Naive thymus-derived CD4-positive, alpha-beta T cell (primary cell): ENCODE measurements at regions of chr11 and their contacts with region 1.

Region 1: GRCh38 chr11:116927163-116927974 is 89.9 kb upstream of the APOA1 start:
- DNase-seq: peak in 7 of 9 donors; percentile 49 to 75 (median 65)
- ATAC-seq: peak; percentile 52
- H3K4me3 ChIP-seq: peak overlapping the region; percentile 18
- H3K4me3 Mint-ChIP-seq: peak overlapping the region; percentile 56 to 85 (median 72)
- H3K27ac ChIP-seq: peak overlapping the region; percentile 81
- H3K27ac Mint-ChIP-seq: peak overlapping the region; percentile 64 to 98 (median 94)
- H3K4me1 ChIP-seq: peaks cover 76 to 80% of the 10 kb centered on the region in 2 donors
- H3K4me1 Mint-ChIP-seq: peaks cover 53 to 90% (median 83%) of the 10 kb centered on the region in 7 donors
- H3K27me3 ChIP-seq: no peaks in the 10 kb centered on the region
- H3K27me3 Mint-ChIP-seq: no peaks in the 10 kb centered on the region

Region 2: DNA sequence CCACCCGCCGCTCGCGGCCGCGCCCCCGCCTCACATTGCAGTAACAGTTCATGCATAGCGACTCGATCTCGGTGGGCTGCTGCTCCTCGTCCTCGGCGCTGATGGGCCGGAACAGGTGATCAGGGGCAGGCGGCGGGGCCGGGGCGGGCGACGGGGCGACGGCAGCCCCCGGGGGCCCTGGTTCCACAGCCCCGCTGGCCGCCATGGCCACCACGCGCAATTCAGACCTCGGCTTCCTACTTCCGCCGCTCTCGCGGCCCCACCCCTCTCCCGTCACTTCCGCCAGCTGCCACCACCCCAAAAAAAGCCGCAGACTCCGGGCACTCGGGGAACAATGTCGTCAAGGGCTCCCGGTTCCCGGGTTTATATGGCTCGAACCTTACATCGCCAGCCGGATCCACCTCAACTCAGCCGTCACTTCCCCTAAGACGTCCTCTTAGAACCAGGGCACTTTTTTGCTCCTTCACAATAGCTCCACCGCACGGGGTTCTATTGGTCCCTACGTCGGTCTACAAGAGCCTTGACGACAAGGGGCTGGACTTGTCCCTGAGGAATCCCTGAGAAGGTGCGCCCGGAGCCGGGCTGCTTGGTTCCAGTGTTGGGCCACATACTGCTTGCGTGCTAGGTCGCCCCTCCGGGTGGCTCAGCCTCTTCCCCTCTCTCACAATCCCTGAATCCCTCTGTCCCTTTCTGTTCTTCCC is 139.4 kb before region 1 on chr11 and contains the start of gene ZPR1:
- CTCF ChIA-PET with region 1: no interaction called
- POLR2A ChIA-PET with region 1: interaction called, 3 read pairs
- intact Hi-C with region 1: loop called in 1 of 2 experiments (anchors 2 kb)
- DNase-seq: peak; percentile 75 to 88 (median 87)
- ATAC-seq: peak; percentile 92
- H3K4me3 ChIP-seq: peak within 1 kb of the TSS; percentile 79
- H3K4me3 Mint-ChIP-seq: peak within 1 kb of the TSS; percentile 85 to 98 (median 92)
- H3K27ac ChIP-seq: peak within 1 kb of the TSS; percentile 95
- H3K27ac Mint-ChIP-seq: peak within 1 kb of the TSS; percentile 80 to 98 (median 96)
- H3K4me1 ChIP-seq: peaks cover 17 to 24% of the 10 kb centered on the region in 2 donors
- H3K4me1 Mint-ChIP-seq: peaks cover 32 to 57% (median 44%) of the 10 kb centered on the region in 7 donors
- H3K27me3 ChIP-seq: no peaks in the 10 kb centered on the region
- H3K27me3 Mint-ChIP-seq: no peaks in the 10 kb centered on the region
- total RNA-seq, gene ZPR1: 65.8 to 117 (median 68.8) TPM

Region 3: GRCh38 chr11:116890193-116890592 is 37.2 kb before region 1 on chr11:
- CTCF ChIA-PET with region 1: interaction called, 3 read pairs
- POLR2A ChIA-PET with region 1: no interaction called
- intact Hi-C with region 1: loop called (anchors 5 to 10 kb)
- DNase-seq: peak in 4 of 9 donors; percentile 3 to 19 (median 10)
- ATAC-seq: peak; percentile 58
- H3K4me3 ChIP-seq: no peak overlapping the region
- H3K4me3 Mint-ChIP-seq: peak overlapping the region in 4 of 10 donors; percentile 2 to 11 (median 8)
- H3K27ac ChIP-seq: no peak overlapping the region
- H3K27ac Mint-ChIP-seq: peak overlapping the region; percentile 0 to 83 (median 64)
- H3K4me1 ChIP-seq: peaks cover 7 to 12% of the 10 kb centered on the region in 2 donors
- H3K4me1 Mint-ChIP-seq: peaks cover 13 to 29% (median 19%) of the 10 kb centered on the region in 7 donors
- H3K27me3 ChIP-seq: no peaks in the 10 kb centered on the region
- H3K27me3 Mint-ChIP-seq: no peaks in the 10 kb centered on the region

Region 4: GRCh38 chr11:116986521-116987105 is 59.2 kb after region 1 on chr11:
- CTCF ChIA-PET with region 1: no interaction called
- POLR2A ChIA-PET with region 1: no interaction called
- intact Hi-C with region 1: loop called (anchors 5 kb)
- DNase-seq: no peak
- ATAC-seq: peak; percentile 71
- H3K4me3 ChIP-seq: no peak overlapping the region
- H3K4me3 Mint-ChIP-seq: peak overlapping the region in 8 of 10 donors; percentile 0 to 67 (median 20)
- H3K27ac ChIP-seq: no peak overlapping the region
- H3K27ac Mint-ChIP-seq: peak overlapping the region in 5 of 9 donors; percentile 0 to 80 (median 10)
- H3K4me1 ChIP-seq: peaks cover 0 to 10% of the 10 kb centered on the region in 2 donors
- H3K4me1 Mint-ChIP-seq: peaks cover 45 to 75% (median 69%) of the 10 kb centered on the region in 7 donors
- H3K27me3 ChIP-seq: no peaks in the 10 kb centered on the region
- H3K27me3 Mint-ChIP-seq: no peaks in the 10 kb centered on the region

Region 5: GRCh38 chr11:117037279-117037974 is 110.1 kb after region 1 on chr11:
- CTCF ChIA-PET with region 1: interaction called, 4 read pairs
- POLR2A ChIA-PET with region 1: no interaction called
- intact Hi-C with region 1: loop called in 1 of 2 experiments (anchors 5 kb)
- DNase-seq: peak in 6 of 9 donors; percentile 21 to 51 (median 38)
- ATAC-seq: peak; percentile 48
- H3K4me3 ChIP-seq: no peak overlapping the region
- H3K4me3 Mint-ChIP-seq: peak overlapping the region; percentile 4 to 68 (median 50)
- H3K27ac ChIP-seq: peak overlapping the region; percentile 58
- H3K27ac Mint-ChIP-seq: peak overlapping the region; percentile 34 to 93 (median 85)
- H3K4me1 ChIP-seq: peaks cover 17 to 24% of the 10 kb centered on the region in 2 donors
- H3K4me1 Mint-ChIP-seq: peaks cover 25 to 79% (median 64%) of the 10 kb centered on the region in 7 donors
- H3K27me3 ChIP-seq: no peaks in the 10 kb centered on the region
- H3K27me3 Mint-ChIP-seq: no peaks in the 10 kb centered on the region

Region 6: GRCh38 chr11:117178210-117179034 is 251.1 kb after region 1 on chr11 and contains the start of gene SIDT2:
- CTCF ChIA-PET with region 1: no interaction called
- POLR2A ChIA-PET with region 1: interaction called, 5 read pairs
- intact Hi-C with region 1: loop called in 1 of 2 experiments (anchors 2 kb)
- DNase-seq: peak; percentile 75 to 89 (median 87)
- ATAC-seq: peak; percentile 94
- H3K4me3 ChIP-seq: peak within 1 kb of the TSS; percentile 87
- H3K4me3 Mint-ChIP-seq: peak within 1 kb of the TSS; percentile 92 to 98 (median 94)
- H3K27ac ChIP-seq: peak within 1 kb of the TSS; percentile 85
- H3K27ac Mint-ChIP-seq: peak within 1 kb of the TSS; percentile 88 to 98 (median 96)
- H3K4me1 ChIP-seq: peaks cover 12 to 26% of the 10 kb centered on the region in 2 donors
- H3K4me1 Mint-ChIP-seq: peaks cover 26 to 42% (median 32%) of the 10 kb centered on the region in 7 donors
- H3K27me3 ChIP-seq: no peaks in the 10 kb centered on the region
- H3K27me3 Mint-ChIP-seq: no peaks in the 10 kb centered on the region
- total RNA-seq, gene SIDT2: 31.7 to 187 (median 60.5) TPM

Region 7: GRCh38 chr11:118715245-118715831 is 1788.0 kb after region 1 on chr11:
- CTCF ChIA-PET with region 1: no interaction called
- POLR2A ChIA-PET with region 1: no interaction called
- intact Hi-C with region 1: no loop called
- DNase-seq: no peak
- ATAC-seq: no peak
- H3K4me3 ChIP-seq: no peak overlapping the region
- H3K4me3 Mint-ChIP-seq: no peak overlapping the region
- H3K27ac ChIP-seq: no peak overlapping the region
- H3K27ac Mint-ChIP-seq: peak overlapping the region in 1 of 9 donors; percentile 34
- H3K4me1 ChIP-seq: no peaks in the 10 kb centered on the region
- H3K4me1 Mint-ChIP-seq: peaks cover 4 to 13% (median 9%) of the 10 kb centered on the region in 7 donors
- H3K27me3 ChIP-seq: no peaks in the 10 kb centered on the region
- H3K27me3 Mint-ChIP-seq: peaks cover 0 to 10% (median 0%) of the 10 kb centered on the region in 5 donors